ENCODE measurements at regions of chr2 and their contacts with region 1.

Region 1: GRCh38 chr2:27370026-27370815 is at the starts of genes EIF2B4 and SNX17:
- DNase-seq: peak; percentile 100
- total RNA-seq, gene EIF2B4: 34.9 TPM
- total RNA-seq, gene SNX17: 80.3 TPM

Region 2: DNA sequence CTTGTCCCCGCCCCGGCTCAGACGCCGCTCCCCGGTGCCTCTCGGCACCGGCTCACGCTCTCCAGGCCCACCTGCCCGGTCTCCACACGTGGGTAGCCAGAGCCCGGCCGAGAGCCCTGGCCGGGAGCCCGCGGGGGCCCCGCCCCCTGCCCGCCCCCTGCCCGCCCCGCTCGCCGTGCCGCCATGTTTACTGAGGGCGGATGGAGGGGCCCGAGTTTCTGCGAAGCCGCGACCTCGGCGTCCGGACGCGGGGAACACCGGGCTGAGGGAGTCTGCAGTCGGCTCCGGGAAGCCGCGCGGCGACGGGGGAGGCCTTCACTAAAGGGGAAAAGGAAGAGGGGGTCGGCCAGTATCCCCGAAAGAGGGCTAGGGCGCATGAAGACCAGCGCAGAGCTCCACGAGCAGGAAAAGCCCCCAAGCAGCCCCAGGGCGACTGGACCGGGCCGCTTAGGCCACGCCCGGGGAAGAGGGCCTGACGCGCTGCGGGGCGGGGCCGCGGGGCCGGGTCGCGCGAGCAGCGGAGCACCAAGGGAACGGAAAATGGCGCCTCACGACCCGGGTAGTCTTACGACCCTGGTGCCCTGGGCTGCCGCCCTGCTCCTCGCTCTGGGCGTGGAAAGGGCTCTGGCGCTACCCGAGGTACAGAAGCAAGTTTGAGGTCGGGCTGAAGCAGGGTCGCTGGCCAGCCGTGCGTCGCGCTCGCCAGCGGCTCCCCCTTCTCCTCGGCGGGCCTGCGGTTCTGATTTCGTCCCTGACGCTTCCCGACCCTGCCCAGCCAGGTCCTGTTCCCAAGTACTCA is 158.2 kb before region 1 on chr2 and contains the starts of genes ATRAID and SLC5A6:
- intact Hi-C with region 1: loop called (anchors 2 kb)
- DNase-seq: peak; percentile 95
- total RNA-seq, gene ATRAID: 131 TPM
- total RNA-seq, gene SLC5A6: 11.4 TPM

Region 3: GRCh38 chr2:27322766-27323595 is 47.2 kb before region 1 on chr2 and contains the start of gene MPV17:
- intact Hi-C with region 1: loop called (anchors 1 kb)
- DNase-seq: peak; percentile 97
- total RNA-seq, gene MPV17: 69.3 TPM

Region 4: GRCh38 chr2:27356382-27357181 is 13.6 kb before region 1 on chr2 and contains the start of gene GTF3C2:
- intact Hi-C with region 1: loop called (anchors 1 kb)
- DNase-seq: peak; percentile 96
- total RNA-seq, gene GTF3C2: 23.9 TPM

Region 5: DNA sequence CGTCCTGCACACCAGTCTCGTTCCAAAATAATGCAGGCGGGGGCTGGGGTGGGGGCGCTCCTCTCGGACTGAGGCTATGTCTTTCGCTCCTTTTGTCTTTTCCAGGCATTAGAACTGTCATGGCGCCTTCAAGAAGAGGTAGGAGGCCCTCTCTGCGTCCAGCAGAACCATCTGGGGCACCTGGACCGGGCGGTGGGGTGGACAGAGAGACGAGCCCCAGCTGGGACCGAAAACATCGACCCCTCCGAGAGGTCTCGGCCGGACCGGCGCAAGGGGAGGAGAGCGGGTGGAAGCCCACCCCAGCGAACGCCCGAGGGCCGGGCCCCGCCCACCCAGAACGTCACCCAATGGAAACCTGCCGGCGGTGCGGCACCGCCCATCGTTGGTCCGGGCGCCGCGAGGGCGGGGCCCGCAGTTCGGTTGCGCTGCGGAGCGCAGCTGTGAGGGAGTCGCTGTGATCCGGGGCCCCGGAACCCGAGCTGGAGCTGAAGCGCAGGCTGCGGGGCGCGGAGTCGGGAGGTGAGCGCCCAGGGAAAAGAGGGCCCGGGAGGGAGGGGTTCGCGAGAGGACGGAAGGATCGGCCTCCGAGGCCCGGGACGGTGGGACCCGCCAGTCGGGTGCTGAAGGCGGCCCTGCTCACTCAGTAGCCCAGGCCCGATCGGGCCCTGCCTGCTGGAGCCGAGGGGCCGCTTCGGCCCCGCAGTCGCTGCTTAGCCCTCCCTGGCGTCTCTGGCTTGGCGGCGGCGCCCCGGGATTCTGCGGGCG is 58.2 kb after region 1 on chr2 and contains the start of gene NRBP1:
- intact Hi-C with region 1: loop called (anchors 1 kb)
- DNase-seq: peak; percentile 96
- total RNA-seq, gene NRBP1: 64.6 TPM

Measured in cardiac septum (tissue), 1 donor.